ENCODE measurements at regions of chr3 and their contacts with region 1.

Region 1: DNA sequence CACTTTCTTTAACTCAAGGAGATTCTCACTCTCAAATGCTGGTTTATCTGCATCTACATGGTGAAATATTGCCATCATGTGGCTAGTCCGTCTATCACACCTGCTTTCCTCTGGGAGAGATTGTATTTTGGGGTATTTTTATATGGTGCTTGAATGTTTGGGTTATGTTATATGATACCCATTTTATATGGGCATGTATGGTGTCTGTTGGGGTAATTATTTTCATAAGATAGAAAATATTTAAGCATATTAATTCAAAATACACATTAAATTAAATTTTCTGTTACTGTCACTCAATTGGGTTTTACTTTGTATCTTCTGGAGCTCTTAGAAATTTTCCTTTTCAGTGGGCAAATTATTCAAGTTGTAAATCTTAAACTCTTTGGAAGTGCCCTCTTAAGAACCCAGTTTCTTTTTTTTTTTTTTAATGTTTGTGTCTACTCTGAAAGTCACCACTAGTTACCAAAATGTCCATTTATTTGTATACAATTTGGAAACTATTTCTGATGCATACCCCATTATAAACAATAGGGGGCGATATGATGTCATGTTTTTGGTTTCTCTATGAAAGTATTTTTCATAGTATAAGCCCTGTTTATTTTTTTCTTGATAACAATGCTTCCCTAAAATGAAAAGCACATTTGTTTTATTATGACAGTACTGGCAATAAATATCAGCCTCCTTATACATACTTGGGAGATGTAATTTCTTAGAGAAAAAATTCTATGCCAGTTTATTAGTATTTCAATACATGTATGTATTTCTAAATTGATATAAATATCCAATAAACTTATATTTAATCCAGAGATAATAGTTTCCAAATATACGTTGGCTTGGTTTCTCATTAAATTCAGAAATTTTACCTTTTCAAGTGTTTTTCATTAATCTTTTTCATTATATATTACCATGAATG is 36.1 kb upstream of the PLSCR5 start:
- DNase-seq: peak; percentile 69
- H3K4me3 ChIP-seq: no peak overlapping the region
- H3K27ac ChIP-seq: no peak overlapping the region
- H3K4me1 ChIP-seq: no peaks in the 10 kb centered on the region
- H3K27me3 ChIP-seq: no peaks in the 10 kb centered on the region
- CTCF ChIP-seq: peak; percentile 38
- POLR2A ChIP-seq: no peak

Region 2: DNA sequence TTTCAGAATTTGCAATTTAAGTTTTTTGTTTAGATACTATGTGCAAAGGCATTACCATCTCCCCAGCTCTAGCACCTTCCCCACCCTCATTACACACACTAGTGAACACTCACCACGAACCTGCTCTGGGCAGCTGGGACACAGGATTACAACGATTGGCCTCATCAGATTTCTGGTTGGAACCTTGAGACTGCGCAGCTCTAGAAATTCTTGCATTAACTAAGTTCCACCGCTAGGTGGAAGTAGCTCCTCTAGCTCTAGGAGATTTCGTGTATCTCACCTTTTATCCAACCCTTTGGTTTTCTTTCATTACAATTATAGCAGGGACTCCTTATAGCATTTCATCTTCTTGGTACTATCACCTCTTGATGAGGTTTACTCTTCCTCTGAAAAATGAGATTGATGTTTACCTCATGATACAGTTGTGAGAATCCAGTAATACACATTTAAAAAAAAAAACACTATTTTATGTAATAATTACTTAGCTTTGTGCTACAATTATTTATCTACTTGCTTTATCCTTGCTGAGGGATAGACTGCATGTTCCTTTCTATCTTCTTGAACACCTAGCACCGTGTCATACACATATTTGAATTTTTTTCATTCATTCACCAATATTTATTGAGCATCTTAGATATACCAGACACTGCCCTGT is 451.6 kb before region 1 on chr3:
- CTCF ChIA-PET with region 1: interaction called, 6 read pairs
- POLR2A ChIA-PET with region 1: no interaction called
- dilution Hi-C with region 1: no loop called
- intact Hi-C with region 1: loop called (anchors 10 kb)
- DNase-seq: peak; percentile 70
- H3K4me3 ChIP-seq: no peak overlapping the region
- H3K27ac ChIP-seq: peak overlapping the region; percentile 43
- H3K4me1 ChIP-seq: peaks cover 21% of the 10 kb centered on the region
- H3K27me3 ChIP-seq: no peaks in the 10 kb centered on the region
- CTCF ChIP-seq: peak; percentile 62 to 68
- POLR2A ChIP-seq: no peak

Region 3: GRCh38 chr3:146334151-146334550 is 307.1 kb before region 1 on chr3:
- CTCF ChIA-PET with region 1: interaction called, 5 read pairs
- POLR2A ChIA-PET with region 1: no interaction called
- dilution Hi-C with region 1: no loop called
- intact Hi-C with region 1: loop called (anchors 1 kb)
- DNase-seq: peak; percentile 46
- H3K4me3 ChIP-seq: no peak overlapping the region
- H3K27ac ChIP-seq: no peak overlapping the region
- H3K4me1 ChIP-seq: no peaks in the 10 kb centered on the region
- H3K27me3 ChIP-seq: no peaks in the 10 kb centered on the region
- CTCF ChIP-seq: peak in 1 of 2 donors; percentile 21
- POLR2A ChIP-seq: no peak

Region 4: GRCh38 chr3:146589899-146590508 is 51.2 kb before region 1 on chr3:
- CTCF ChIA-PET with region 1: interaction called, 122 read pairs
- POLR2A ChIA-PET with region 1: no interaction called
- dilution Hi-C with region 1: no loop called
- intact Hi-C with region 1: loop called (anchors 1 kb)
- DNase-seq: peak; percentile 67
- H3K4me3 ChIP-seq: no peak overlapping the region
- H3K27ac ChIP-seq: no peak overlapping the region
- H3K4me1 ChIP-seq: no peaks in the 10 kb centered on the region
- H3K27me3 ChIP-seq: no peaks in the 10 kb centered on the region
- CTCF ChIP-seq: peak; percentile 23 to 26
- POLR2A ChIP-seq: no peak

Region 5: GRCh38 chr3:146625117-146625775 is 16.0 kb before region 1 on chr3:
- CTCF ChIA-PET with region 1: interaction called, 19 read pairs
- POLR2A ChIA-PET with region 1: no interaction called
- dilution Hi-C with region 1: no loop called
- intact Hi-C with region 1: no loop called
- DNase-seq: peak; percentile 66
- H3K4me3 ChIP-seq: peak overlapping the region in 2 of 3 experiments; percentile 7 to 67
- H3K27ac ChIP-seq: peak overlapping the region; percentile 48
- H3K4me1 ChIP-seq: peaks cover 18% of the 10 kb centered on the region
- H3K27me3 ChIP-seq: no peaks in the 10 kb centered on the region
- CTCF ChIP-seq: no peak
- POLR2A ChIP-seq: no peak

Region 6: GRCh38 chr3:146823622-146824021 is 182.4 kb after region 1 on chr3:
- CTCF ChIA-PET with region 1: interaction called, 3 read pairs
- POLR2A ChIA-PET with region 1: no interaction called
- dilution Hi-C with region 1: no loop called
- intact Hi-C with region 1: loop called (anchors 5 kb)
- DNase-seq: no peak
- H3K4me3 ChIP-seq: no peak overlapping the region
- H3K27ac ChIP-seq: no peak overlapping the region
- H3K4me1 ChIP-seq: no peaks in the 10 kb centered on the region
- H3K27me3 ChIP-seq: no peaks in the 10 kb centered on the region
- CTCF ChIP-seq: no peak
- POLR2A ChIP-seq: no peak

Region 7: DNA sequence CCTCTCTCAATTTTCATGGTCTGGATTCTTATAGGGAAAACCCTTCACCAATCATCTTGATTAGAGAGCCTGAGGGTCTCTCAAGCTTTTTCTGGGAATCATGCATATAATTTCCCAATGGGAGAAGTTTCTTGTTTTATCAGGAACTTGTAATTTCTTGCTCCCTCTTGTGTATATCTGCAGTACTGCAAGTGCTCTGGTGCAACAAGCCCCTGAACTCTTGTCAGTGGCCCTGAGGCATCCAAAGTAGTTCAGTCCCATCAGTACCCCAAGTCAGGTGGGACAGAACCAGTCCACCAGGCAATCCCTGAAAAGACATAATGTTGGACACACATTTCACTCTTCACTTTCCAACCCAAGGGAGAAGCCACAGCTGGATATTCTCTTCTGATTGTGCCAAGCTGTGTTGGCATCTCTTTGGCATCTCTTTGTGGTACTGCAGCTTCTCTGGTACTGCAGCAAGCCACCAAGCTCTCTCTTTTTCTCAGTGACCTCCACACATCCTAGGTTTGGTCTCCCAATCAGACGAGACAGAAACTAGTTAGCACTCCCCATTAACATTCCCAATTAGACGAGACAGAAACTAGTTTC is 550.7 kb after region 1 on chr3:
- CTCF ChIA-PET with region 1: interaction called, 17 read pairs
- POLR2A ChIA-PET with region 1: no interaction called
- dilution Hi-C with region 1: no loop called
- intact Hi-C with region 1: loop called (anchors 1 kb)
- DNase-seq: peak; percentile 82
- H3K4me3 ChIP-seq: no peak overlapping the region
- H3K27ac ChIP-seq: no peak overlapping the region
- H3K4me1 ChIP-seq: no peaks in the 10 kb centered on the region
- H3K27me3 ChIP-seq: no peaks in the 10 kb centered on the region
- CTCF ChIP-seq: peak; percentile 67 to 71
- POLR2A ChIP-seq: no peak